B cell (primary cell): ENCODE measurements at regions of chr1 and their contacts with region 1.

Region 1: GRCh38 chr1:37807555-37808368 is at the starts of genes C1orf122 and YRDC:
- DNase-seq: peak; percentile 91
- ATAC-seq: peak; percentile 90
- H3K4me3 ChIP-seq: peak within 1 kb of the TSS; percentile 78 to 88 (median 83)
- H3K4me3 Mint-ChIP-seq: peak within 1 kb of the TSS; percentile 98
- H3K27ac ChIP-seq: peak within 1 kb of the TSS; percentile 68 to 94
- H3K27ac Mint-ChIP-seq: peak within 1 kb of the TSS; percentile 98
- H3K4me1 ChIP-seq: peaks cover 14 to 31% of the 10 kb centered on the region in 2 donors
- H3K4me1 Mint-ChIP-seq: peaks cover 40% of the 10 kb centered on the region
- H3K27me3 ChIP-seq: no peaks in the 10 kb centered on the region
- H3K27me3 Mint-ChIP-seq: no peaks in the 10 kb centered on the region
- CTCF ChIP-seq: no peak
- total RNA-seq, gene C1orf122: 15.7 and 16.9 TPM in 2 replicates
- total RNA-seq, gene YRDC: 12.5 and 14.0 TPM in 2 replicates

Region 2: GRCh38 chr1:37238364-37239224 is 569.2 kb before region 1 on chr1:
- CTCF ChIA-PET with region 1: no interaction called
- POLR2A ChIA-PET with region 1: no interaction called
- intact Hi-C with region 1: no loop called
- DNase-seq: no peak
- ATAC-seq: no peak
- H3K4me3 ChIP-seq: no peak overlapping the region
- H3K4me3 Mint-ChIP-seq: peak overlapping the region; percentile 44
- H3K27ac ChIP-seq: no peak overlapping the region
- H3K27ac Mint-ChIP-seq: no peak overlapping the region
- H3K4me1 ChIP-seq: peaks cover 3 to 18% of the 10 kb centered on the region in 2 donors
- H3K4me1 Mint-ChIP-seq: peaks cover 22% of the 10 kb centered on the region
- H3K27me3 ChIP-seq: peaks cover 0 to 22% (median 1%) of the 10 kb centered on the region in 4 experiments
- H3K27me3 Mint-ChIP-seq: peaks cover 16% of the 10 kb centered on the region
- CTCF ChIP-seq: no peak

Region 3: DNA sequence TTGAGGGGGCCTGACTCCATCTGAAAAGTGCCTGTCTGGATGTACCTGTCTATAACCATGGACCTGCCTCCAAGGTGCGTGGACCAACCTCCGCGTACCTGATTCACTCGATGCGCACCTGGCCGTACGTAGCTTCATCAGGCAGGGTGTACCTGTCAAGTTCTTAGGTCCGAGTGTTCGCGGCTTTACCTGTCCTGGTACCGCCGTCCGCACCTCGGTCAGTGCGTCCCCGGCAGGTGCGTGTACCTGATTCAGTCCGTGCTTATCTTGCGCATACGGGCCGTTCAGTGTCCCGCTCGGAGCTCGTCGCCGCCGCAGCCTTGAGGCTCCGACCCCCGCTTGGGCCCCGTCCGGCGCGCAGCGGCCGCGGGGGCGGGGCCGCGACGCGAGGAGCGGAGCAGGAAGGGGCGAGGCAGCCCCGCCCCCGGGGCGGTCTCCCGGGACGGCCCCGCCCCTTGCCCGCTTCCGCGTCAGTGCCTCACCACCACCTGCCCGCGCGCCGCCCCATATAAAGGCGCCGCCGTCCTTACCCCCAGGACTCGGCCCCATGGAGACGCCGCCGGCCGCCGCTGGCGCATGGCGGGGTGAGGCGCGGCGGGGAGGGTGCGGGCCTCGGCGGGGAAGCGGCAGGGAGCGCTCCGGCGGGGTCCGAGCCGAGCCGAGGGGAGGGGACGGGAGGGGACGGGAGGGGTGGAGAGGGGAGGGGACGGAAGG is 333.6 kb before region 1 on chr1 and contains the start of gene ZC3H12A:
- CTCF ChIA-PET with region 1: no interaction called
- POLR2A ChIA-PET with region 1: no interaction called
- intact Hi-C with region 1: loop called (anchors 2 kb)
- DNase-seq: peak; percentile 96
- ATAC-seq: peak; percentile 69
- H3K4me3 ChIP-seq: peak within 1 kb of the TSS; percentile 94 to 99 (median 98)
- H3K4me3 Mint-ChIP-seq: peak within 1 kb of the TSS; percentile 100
- H3K27ac ChIP-seq: peak within 1 kb of the TSS; percentile 96 to 97
- H3K27ac Mint-ChIP-seq: peak within 1 kb of the TSS; percentile 98
- H3K4me1 ChIP-seq: peaks cover 23 to 50% of the 10 kb centered on the region in 2 donors
- H3K4me1 Mint-ChIP-seq: peaks cover 51% of the 10 kb centered on the region
- H3K27me3 ChIP-seq: peaks cover 0 to 6% (median 0%) of the 10 kb centered on the region in 4 experiments
- H3K27me3 Mint-ChIP-seq: peaks cover 7% of the 10 kb centered on the region
- CTCF ChIP-seq: no peak
- total RNA-seq, gene ZC3H12A: 67.9 and 73.0 TPM in 2 replicates

Region 4: GRCh38 chr1:37793773-37794371 is 13.9 kb before region 1 on chr1 and contains the start of gene MANEAL:
- CTCF ChIA-PET with region 1: interaction called, 6 read pairs
- POLR2A ChIA-PET with region 1: interaction called, 5 read pairs
- intact Hi-C with region 1: loop called (anchors 2 kb)
- DNase-seq: peak; percentile 71
- ATAC-seq: peak; percentile 90
- H3K4me3 ChIP-seq: peak within 1 kb of the TSS in 4 of 5 experiments; percentile 40 to 66 (median 62)
- H3K4me3 Mint-ChIP-seq: peak within 1 kb of the TSS; percentile 85
- H3K27ac ChIP-seq: no peak within 1 kb of the TSS
- H3K27ac Mint-ChIP-seq: peak within 1 kb of the TSS; percentile 53
- H3K4me1 ChIP-seq: peaks cover 15 to 18% of the 10 kb centered on the region in 2 donors
- H3K4me1 Mint-ChIP-seq: peaks cover 18% of the 10 kb centered on the region
- H3K27me3 ChIP-seq: peaks cover 0 to 17% (median 1%) of the 10 kb centered on the region in 4 experiments
- H3K27me3 Mint-ChIP-seq: peaks cover 12% of the 10 kb centered on the region
- CTCF ChIP-seq: no peak
- total RNA-seq, gene MANEAL: 6.6 and 7.8 TPM in 2 replicates

Region 5: GRCh38 chr1:37946703-37947360 is 139.1 kb after region 1 on chr1 and contains the start of gene INPP5B:
- CTCF ChIA-PET with region 1: no interaction called
- POLR2A ChIA-PET with region 1: no interaction called
- intact Hi-C with region 1: loop called (anchors 5 kb)
- DNase-seq: peak; percentile 79
- ATAC-seq: peak; percentile 100
- H3K4me3 ChIP-seq: peak within 1 kb of the TSS; percentile 50 to 73 (median 67)
- H3K4me3 Mint-ChIP-seq: peak within 1 kb of the TSS; percentile 91
- H3K27ac ChIP-seq: peak within 1 kb of the TSS in 1 of 2 donors; percentile 56
- H3K27ac Mint-ChIP-seq: peak within 1 kb of the TSS; percentile 86
- H3K4me1 ChIP-seq: peaks cover 14 to 19% of the 10 kb centered on the region in 2 donors
- H3K4me1 Mint-ChIP-seq: peaks cover 14% of the 10 kb centered on the region
- H3K27me3 ChIP-seq: no peaks in the 10 kb centered on the region
- H3K27me3 Mint-ChIP-seq: no peaks in the 10 kb centered on the region
- CTCF ChIP-seq: no peak
- total RNA-seq, gene INPP5B: 63.3 and 66.9 TPM in 2 replicates

Region 6: GRCh38 chr1:39006726-39007645 is 1199.2 kb after region 1 on chr1:
- CTCF ChIA-PET with region 1: no interaction called
- POLR2A ChIA-PET with region 1: no interaction called
- intact Hi-C with region 1: no loop called
- DNase-seq: no peak
- ATAC-seq: no peak
- H3K4me3 ChIP-seq: no peak overlapping the region
- H3K4me3 Mint-ChIP-seq: no peak overlapping the region
- H3K27ac ChIP-seq: no peak overlapping the region
- H3K27ac Mint-ChIP-seq: no peak overlapping the region
- H3K4me1 ChIP-seq: no peaks in the 10 kb centered on the region
- H3K4me1 Mint-ChIP-seq: peaks cover 2% of the 10 kb centered on the region
- H3K27me3 ChIP-seq: no peaks in the 10 kb centered on the region
- H3K27me3 Mint-ChIP-seq: no peaks in the 10 kb centered on the region
- CTCF ChIP-seq: no peak